ENCODE measurements at regions of chr12 and their contacts with region 1.

Region 1: GRCh38 chr12:131621701-131622421 is 89.0 kb upstream of the SFSWAP start:
- DNase-seq: no peak
- ATAC-seq: no peak

Region 2: DNA sequence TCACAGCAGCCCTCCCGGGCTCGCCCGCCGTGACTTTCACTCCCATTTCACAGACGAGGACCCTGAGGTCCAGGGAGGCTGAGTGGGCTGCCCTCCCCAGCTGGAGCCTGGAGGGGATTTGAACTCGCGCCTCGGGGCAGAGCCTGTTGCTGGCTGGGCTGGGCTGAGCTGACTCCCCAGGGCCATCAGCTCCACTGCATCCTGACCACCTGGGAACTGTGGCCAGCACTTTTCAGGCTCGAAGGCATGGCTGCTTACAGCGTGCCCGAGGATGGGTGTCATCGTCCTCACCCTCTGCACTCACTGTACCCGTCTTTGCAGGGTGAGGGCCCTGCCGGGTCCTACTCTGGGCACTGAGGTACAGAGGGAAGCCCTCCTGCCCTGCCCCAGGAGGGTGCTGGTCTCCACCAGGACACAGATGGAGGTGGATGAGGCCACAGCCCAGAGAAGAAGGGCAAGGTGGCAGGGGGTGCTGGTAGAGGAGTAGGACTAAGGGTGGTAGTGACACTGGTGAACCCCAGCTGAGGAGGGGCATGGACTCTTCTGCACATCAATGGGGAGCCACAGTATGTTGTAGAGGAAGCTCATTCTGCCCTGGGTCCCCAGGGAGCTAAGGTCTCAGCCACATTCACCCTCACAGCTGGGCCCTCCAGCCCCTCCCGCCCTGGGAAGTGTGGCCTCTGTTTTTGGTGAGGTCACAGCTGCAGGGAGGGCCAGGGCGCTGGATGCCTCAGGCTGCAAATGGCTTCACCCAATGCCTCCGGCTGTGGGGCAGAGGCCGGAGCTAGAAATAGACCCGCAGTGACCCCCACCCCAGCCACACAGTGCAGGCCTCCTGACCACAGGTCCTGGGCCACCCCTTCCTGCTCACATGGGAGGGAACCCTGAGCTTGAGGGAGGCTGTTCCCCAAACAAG is 276.1 kb before region 1 on chr12:
- intact Hi-C with region 1: loop called (anchors 5 kb)
- DNase-seq: no peak
- ATAC-seq: no peak

Region 3: DNA sequence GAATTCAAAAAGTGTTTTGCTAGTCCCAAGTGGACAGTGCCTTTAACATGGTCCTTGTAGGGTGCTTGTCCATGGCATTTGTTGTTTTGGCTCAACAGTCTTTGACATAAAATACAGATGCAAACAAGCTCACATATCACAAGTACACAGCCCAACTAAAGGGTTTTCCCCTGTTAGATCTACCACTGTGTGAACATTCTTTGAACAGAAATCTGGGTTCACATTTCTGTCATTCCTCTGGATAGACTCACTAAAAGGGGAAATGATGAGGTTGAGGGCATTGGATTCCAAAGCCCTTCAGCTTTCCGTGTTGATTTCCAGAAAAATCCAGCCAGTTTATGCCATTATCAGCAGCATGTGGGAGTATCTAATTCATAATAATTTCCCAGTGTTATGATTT is 382.0 kb after region 1 on chr12:
- intact Hi-C with region 1: loop called (anchors 10 kb)
- DNase-seq: no peak
- ATAC-seq: no peak